OCI-LY7 (cell line): ENCODE measurements at regions of chr2 and their contacts with region 1.

Region 1: DNA sequence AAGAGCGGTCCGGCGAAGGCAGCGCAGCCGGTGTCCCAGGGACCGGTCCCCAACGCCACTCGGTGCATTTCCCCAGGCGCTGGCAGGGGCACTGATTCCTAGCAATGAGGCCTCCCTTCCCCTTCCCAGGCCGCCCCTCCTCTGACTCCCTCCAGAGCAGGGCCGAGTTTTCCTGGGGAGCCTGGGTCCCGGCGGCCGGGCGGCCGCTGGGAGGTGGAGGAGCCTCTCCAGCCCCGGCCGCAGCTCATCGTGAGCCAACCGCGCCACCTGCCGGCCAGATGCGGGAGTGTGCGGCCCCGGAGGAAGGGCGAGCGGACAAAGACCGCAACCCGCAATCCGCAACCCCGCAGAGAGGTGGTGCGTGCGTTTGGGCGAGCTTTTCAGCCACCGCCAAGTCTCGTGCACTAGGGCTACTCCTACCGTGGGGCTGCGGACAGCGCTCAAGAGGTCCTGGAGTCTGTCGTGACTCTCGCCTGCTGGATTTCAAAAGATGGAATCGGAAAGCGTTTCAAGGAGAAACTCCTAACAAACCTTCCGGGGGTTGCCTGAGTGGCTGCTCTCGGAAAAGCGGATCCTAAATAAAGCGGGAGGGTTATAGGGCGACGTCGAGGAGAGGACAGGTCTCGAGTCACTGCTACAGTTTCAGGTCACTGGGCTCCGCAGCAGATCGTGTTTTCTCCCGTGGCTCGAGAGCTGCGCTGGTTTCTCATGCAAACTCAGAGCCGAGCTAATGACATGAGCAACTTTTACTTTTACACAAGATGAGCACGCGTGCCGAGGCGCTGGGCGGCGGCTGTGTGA is 1.5 kb upstream of the EPHA4 start:
- DNase-seq: peak; percentile 63
- H3K4me3 ChIP-seq: no peak overlapping the region
- H3K27ac ChIP-seq: no peak overlapping the region
- H3K4me1 ChIP-seq: peaks cover 11% of the 10 kb centered on the region
- CTCF ChIP-seq: peak; percentile 87

Region 2: GRCh38 chr2:219736209-219736608 is 1837.4 kb before region 1 on chr2:
- CTCF ChIA-PET with region 1: no interaction called
- POLR2A ChIA-PET with region 1: no interaction called
- intact Hi-C with region 1: loop called (anchors 1 kb)
- DNase-seq: peak; percentile 37
- H3K4me3 ChIP-seq: no peak overlapping the region
- H3K27ac ChIP-seq: no peak overlapping the region
- H3K4me1 ChIP-seq: no peaks in the 10 kb centered on the region
- CTCF ChIP-seq: peak; percentile 84

Region 3: DNA sequence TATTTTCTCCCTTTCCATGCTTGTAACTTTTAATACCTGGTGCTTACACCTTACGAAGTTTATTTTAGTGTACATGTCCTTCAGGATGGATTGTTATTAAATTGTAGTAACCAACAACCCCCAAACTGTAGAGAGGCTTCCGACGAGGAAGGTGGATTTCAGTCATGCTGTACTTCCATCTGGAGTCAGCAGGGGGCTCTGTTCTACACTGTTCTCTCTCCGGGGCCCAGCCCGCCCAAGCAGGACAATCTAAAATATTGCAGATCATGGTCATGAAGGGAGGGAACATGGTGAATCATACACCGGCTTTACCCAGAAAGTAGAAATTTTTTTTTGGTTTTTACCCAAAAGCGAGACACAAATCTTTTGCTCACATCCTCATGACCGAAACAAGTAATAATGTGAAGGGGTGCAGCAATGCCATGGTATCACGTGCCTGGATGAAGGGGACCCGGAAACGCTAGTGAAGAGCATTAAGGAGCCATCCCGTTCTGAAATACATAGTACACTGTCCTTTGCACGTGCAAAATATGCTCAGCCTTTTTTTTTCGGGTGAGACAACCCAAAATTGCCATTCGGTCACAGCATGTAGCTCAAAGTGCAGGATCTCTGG is 886.3 kb before region 1 on chr2:
- CTCF ChIA-PET with region 1: no interaction called
- POLR2A ChIA-PET with region 1: no interaction called
- intact Hi-C with region 1: loop called (anchors 1 kb)
- DNase-seq: peak; percentile 51
- H3K4me3 ChIP-seq: no peak overlapping the region
- H3K27ac ChIP-seq: no peak overlapping the region
- H3K4me1 ChIP-seq: no peaks in the 10 kb centered on the region
- CTCF ChIP-seq: peak; percentile 92

Region 4: GRCh38 chr2:221203125-221203524 is 370.5 kb before region 1 on chr2:
- CTCF ChIA-PET with region 1: no interaction called
- POLR2A ChIA-PET with region 1: no interaction called
- intact Hi-C with region 1: loop called (anchors 5 kb)
- DNase-seq: peak; percentile 94
- H3K4me3 ChIP-seq: peak overlapping the region; percentile 53
- H3K27ac ChIP-seq: peak overlapping the region; percentile 88
- H3K4me1 ChIP-seq: peaks cover 60% of the 10 kb centered on the region
- CTCF ChIP-seq: no peak

Region 5: DNA sequence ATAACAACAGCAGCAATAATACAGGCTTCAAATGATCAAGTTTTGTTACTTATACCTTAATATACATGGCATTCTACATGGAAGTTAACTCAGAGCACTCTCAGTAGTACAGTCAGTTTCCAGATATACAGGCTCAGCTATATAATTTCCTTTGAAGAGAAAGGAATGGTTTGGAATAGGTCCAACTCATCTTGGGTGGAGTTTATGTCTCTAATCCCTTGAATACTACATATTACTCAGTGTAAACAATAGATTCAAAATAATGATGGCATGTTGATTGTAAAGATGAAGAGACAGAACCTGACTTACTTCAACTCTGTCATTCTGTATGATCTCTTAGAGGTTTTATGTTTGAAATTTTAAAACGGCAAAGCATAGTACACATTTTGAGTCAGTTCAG is 176.4 kb before region 1 on chr2:
- CTCF ChIA-PET with region 1: no interaction called
- POLR2A ChIA-PET with region 1: no interaction called
- intact Hi-C with region 1: loop called (anchors 10 kb)
- DNase-seq: no peak
- H3K4me3 ChIP-seq: no peak overlapping the region
- H3K27ac ChIP-seq: no peak overlapping the region
- H3K4me1 ChIP-seq: no peaks in the 10 kb centered on the region
- CTCF ChIP-seq: no peak

Region 6: GRCh38 chr2:221817052-221817451 is 243.4 kb after region 1 on chr2:
- CTCF ChIA-PET with region 1: no interaction called
- POLR2A ChIA-PET with region 1: no interaction called
- intact Hi-C with region 1: no loop called
- DNase-seq: no peak
- H3K4me3 ChIP-seq: no peak overlapping the region
- H3K27ac ChIP-seq: no peak overlapping the region
- H3K4me1 ChIP-seq: no peaks in the 10 kb centered on the region
- CTCF ChIP-seq: no peak